Ovary (tissue), 10 donors: ENCODE measurements at regions of chr11 and their contacts with region 1.

Region 1: DNA sequence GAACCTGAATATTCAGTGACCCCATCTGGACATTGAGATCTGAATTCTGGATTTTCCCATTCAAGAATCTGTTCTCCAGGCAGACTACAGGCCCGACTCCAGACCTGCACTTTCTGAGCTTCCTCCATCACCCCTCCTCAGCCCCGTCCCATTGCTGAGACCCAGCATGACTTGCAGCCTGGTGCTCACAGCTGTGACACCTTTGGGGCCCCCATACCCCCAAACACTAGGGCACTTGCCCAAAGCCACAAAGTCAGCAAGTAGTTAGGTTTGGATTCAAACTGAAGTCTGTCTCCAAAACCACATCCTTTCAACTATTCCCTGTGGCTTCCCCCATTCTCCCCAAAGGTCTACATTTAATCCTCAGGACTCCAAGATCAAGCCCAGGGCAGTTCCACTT is 128.2 kb upstream of the ZBED5 start:
- DNase-seq: no peak
- H3K4me3 ChIP-seq: no peak overlapping the region
- H3K27ac ChIP-seq: no peak overlapping the region
- H3K4me1 ChIP-seq: no peaks in the 10 kb centered on the region
- H3K27me3 ChIP-seq: no peaks in the 10 kb centered on the region
- CTCF ChIP-seq: no peak
- EP300 ChIP-seq: no peak
- POLR2A ChIP-seq: no peak

Region 2: DNA sequence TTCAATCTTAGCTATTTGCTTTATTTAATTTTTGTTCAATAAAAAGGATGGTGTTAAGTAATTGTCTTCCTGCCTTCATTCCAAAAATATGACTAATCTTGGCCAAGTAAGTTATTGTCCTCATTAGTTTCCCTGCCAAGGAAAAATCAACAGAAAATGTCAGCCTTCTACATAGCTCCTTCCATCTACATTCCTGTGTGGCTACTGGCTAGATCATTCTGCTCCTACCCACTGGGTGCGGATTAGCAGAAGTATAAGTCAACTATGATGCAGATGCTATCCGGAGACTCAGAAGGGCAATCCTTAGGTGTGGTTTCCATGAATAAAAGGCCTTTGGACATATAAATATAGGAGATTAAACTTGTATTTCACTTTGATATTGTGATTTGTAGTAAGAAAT is 846.4 kb before region 1 on chr11:
- intact Hi-C with region 1: loop called in 1 of 4 experiments (anchors 5 kb)
- DNase-seq: no peak
- H3K4me3 ChIP-seq: no peak overlapping the region
- H3K27ac ChIP-seq: no peak overlapping the region
- H3K4me1 ChIP-seq: peaks cover 4% of the 10 kb centered on the region
- H3K27me3 ChIP-seq: no peaks in the 10 kb centered on the region
- CTCF ChIP-seq: no peak
- EP300 ChIP-seq: no peak
- POLR2A ChIP-seq: no peak

Region 3: DNA sequence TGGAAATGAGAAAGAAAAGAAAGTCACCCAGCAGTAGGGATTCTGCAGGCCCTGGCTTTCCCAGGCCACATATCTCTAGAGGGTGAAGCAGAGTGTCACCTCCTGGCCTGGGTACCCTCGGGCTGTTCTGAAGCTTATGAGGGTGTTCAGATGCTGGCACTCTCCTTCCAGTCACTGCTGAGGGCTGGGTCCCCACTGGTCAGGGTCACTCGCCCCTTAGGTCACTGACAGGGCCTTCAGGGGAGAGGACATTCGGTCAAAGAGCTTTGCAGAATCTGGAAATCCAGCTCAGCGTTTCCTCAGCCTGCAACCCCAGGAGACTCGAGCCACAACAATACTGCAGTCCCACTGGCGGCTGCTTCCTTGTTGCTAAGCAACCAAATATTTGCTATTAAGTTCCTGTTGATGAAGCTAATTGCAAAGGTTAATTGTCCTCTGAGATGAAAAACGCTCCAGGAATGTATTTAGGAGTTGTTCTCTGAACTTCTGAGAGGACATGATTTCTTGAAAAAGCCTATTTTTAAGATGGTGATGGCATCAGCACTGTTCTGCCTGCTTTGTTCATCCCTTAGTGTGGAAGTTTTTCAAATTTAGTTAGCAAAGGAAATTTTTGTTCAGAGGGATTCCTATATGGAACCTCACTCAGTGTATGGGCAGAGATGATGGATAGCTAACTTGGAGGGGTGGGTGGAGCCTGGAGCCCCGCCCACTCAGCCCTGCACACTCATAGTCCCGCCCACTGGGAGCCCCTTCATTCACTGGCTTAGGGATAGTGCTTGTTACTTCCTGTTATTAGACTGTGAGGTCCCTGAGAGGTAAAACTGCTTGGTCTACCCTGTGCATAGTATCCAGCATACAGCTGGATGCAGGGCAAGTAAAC is 257.8 kb after region 1 on chr11:
- intact Hi-C with region 1: no loop called
- DNase-seq: peak; percentile 10 to 66 (median 27)
- H3K4me3 ChIP-seq: no peak overlapping the region
- H3K27ac ChIP-seq: no peak overlapping the region
- H3K4me1 ChIP-seq: no peaks in the 10 kb centered on the region
- H3K27me3 ChIP-seq: no peaks in the 10 kb centered on the region
- CTCF ChIP-seq: no peak
- EP300 ChIP-seq: no peak
- POLR2A ChIP-seq: no peak